CD8-positive, alpha-beta T cell (primary cell): ENCODE measurements at regions of chr3 and their contacts with region 1.

Region 1: DNA sequence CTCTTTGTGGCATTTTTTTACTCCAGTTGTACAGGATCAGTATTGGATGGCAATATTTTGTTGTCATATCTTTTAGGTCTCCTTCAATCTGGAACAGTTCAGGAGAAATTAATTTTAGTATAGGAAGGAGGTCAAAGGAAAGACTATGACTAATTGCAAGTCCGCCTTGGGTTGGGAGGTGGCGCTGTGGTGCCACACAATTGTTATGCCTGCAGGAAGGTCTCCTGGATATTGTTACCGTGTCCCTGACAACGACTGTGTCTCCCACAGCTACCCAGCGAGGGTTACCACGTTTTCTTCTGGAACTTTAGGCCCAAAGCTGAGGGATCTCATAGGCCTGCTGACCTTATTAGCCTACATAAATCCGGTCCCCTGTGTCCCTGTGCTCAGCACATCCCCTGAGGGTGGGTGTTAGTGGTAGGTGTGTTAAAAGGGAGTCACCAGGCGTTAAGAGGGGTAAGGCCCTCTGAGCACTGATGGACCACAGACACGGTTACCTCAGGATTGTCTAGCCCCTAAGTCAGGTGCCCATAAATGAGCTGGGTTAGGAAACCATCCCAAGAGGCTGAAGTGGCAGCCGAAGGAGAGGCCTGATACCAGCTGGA is 31.5 kb downstream of the KCNAB1 start:
- DNase-seq: peak in 8 of 9 experiments; percentile 25 to 66 (median 54)
- ATAC-seq: peak; percentile 56
- H3K4me3 ChIP-seq: no peak overlapping the region
- H3K4me3 Mint-ChIP-seq: no peak overlapping the region
- H3K27ac ChIP-seq: no peak overlapping the region
- H3K27ac Mint-ChIP-seq: no peak overlapping the region
- H3K4me1 ChIP-seq: no peaks in the 10 kb centered on the region
- H3K4me1 Mint-ChIP-seq: peaks cover 3% of the 10 kb centered on the region
- H3K27me3 ChIP-seq: no peaks in the 10 kb centered on the region
- H3K27me3 Mint-ChIP-seq: peaks cover 5% of the 10 kb centered on the region
- CTCF ChIP-seq: peak; percentile 73

Region 2: DNA sequence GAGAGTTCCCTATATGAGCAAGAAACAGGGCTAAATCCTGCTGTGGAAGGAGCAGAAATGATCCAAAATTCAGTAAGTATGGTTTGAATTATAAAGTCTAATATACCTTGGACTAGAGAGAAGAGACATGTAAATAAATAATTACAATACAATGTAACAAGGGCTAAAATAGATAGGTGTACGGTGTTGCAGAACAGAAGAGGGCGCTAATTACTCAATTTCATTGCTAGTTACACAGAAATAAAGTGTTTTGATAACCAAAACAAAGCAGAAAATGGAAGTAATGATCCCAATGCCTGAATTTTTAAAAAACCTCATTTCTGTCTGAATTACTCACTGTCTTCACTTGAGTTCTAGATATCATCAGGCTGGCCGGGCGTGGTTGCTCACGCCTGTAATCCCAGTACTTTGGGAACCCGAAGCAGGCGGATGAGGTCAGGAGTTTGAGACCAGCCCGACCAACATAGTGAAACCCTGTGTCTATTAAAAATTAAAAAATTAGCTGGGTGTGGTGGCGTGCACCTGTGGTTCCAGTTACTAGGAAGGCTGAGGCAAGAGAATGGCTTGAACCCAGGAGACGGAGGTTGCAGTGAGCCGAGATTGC is 398.8 kb before region 1 on chr3:
- CTCF ChIA-PET with region 1: no interaction called
- POLR2A ChIA-PET with region 1: no interaction called
- intact Hi-C with region 1: no loop called
- DNase-seq: peak in 2 of 9 experiments; percentile 25 to 39
- ATAC-seq: no peak
- H3K4me3 ChIP-seq: no peak overlapping the region
- H3K4me3 Mint-ChIP-seq: no peak overlapping the region
- H3K27ac ChIP-seq: no peak overlapping the region
- H3K27ac Mint-ChIP-seq: no peak overlapping the region
- H3K4me1 ChIP-seq: no peaks in the 10 kb centered on the region
- H3K4me1 Mint-ChIP-seq: no peaks in the 10 kb centered on the region
- H3K27me3 ChIP-seq: no peaks in the 10 kb centered on the region
- H3K27me3 Mint-ChIP-seq: no peaks in the 10 kb centered on the region
- CTCF ChIP-seq: peak; percentile 22

Region 3: GRCh38 chr3:156187146-156187769 is 35.3 kb after region 1 on chr3:
- CTCF ChIA-PET with region 1: no interaction called
- POLR2A ChIA-PET with region 1: no interaction called
- intact Hi-C with region 1: no loop called
- DNase-seq: no peak
- ATAC-seq: no peak
- H3K4me3 ChIP-seq: no peak overlapping the region
- H3K4me3 Mint-ChIP-seq: no peak overlapping the region
- H3K27ac ChIP-seq: no peak overlapping the region
- H3K27ac Mint-ChIP-seq: no peak overlapping the region
- H3K4me1 ChIP-seq: no peaks in the 10 kb centered on the region
- H3K4me1 Mint-ChIP-seq: no peaks in the 10 kb centered on the region
- H3K27me3 ChIP-seq: no peaks in the 10 kb centered on the region
- H3K27me3 Mint-ChIP-seq: no peaks in the 10 kb centered on the region
- CTCF ChIP-seq: no peak

Region 4: GRCh38 chr3:156382458-156383346 is 230.8 kb after region 1 on chr3:
- CTCF ChIA-PET with region 1: interaction called, 5 read pairs
- POLR2A ChIA-PET with region 1: no interaction called
- intact Hi-C with region 1: loop called (anchors 2 to 5 kb)
- DNase-seq: peak in 3 of 9 experiments; percentile 12 to 24 (median 13)
- ATAC-seq: no peak
- H3K4me3 ChIP-seq: no peak overlapping the region
- H3K4me3 Mint-ChIP-seq: no peak overlapping the region
- H3K27ac ChIP-seq: no peak overlapping the region
- H3K27ac Mint-ChIP-seq: no peak overlapping the region
- H3K4me1 ChIP-seq: no peaks in the 10 kb centered on the region
- H3K4me1 Mint-ChIP-seq: no peaks in the 10 kb centered on the region
- H3K27me3 ChIP-seq: no peaks in the 10 kb centered on the region
- H3K27me3 Mint-ChIP-seq: peaks cover 4% of the 10 kb centered on the region
- CTCF ChIP-seq: no peak

Region 5: DNA sequence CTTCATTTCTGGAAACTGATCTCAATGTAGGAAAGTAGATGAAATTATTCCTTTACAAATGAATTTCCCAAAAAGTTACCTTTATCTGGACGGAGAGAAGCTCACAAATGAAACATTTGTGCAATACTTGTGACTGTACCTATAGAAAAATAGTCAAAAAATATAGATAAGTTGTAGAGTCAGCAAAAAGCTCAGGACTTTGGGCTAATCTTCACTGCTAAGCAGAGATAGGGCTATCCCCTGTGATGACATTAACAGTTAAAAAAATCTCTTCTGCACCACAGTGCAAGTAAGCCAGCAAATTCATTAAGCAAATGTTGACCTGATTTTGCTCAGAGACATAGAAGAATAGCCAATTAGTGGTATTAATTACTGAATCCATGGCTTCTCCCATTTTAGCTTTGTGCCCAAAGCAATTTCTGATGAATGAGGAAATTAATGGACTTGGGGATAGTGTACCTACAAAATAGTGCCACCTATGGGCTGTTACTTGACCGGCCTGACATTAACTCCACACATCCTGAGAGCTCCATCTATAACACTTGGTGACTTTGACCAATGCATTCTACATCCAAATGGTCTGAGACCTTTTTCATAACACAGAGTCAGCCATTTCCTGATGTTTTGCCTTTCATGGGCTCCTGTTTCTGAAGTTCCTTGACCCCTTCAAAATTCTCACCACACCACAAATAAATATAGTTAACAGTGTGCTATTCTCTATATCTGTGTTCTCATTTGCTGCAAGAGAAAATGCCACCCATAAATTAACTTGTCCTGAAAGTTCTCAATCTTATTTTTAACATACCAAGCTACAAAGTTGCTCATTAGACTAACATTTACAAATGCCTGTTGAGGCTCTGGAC is 298.0 kb after region 1 on chr3:
- CTCF ChIA-PET with region 1: interaction called, 3 read pairs
- POLR2A ChIA-PET with region 1: no interaction called
- intact Hi-C with region 1: loop called in 1 of 2 experiments (anchors 2 kb)
- DNase-seq: peak in 2 of 9 experiments; percentile 16 to 29
- ATAC-seq: no peak
- H3K4me3 ChIP-seq: no peak overlapping the region
- H3K4me3 Mint-ChIP-seq: no peak overlapping the region
- H3K27ac ChIP-seq: no peak overlapping the region
- H3K27ac Mint-ChIP-seq: no peak overlapping the region
- H3K4me1 ChIP-seq: no peaks in the 10 kb centered on the region
- H3K4me1 Mint-ChIP-seq: no peaks in the 10 kb centered on the region
- H3K27me3 ChIP-seq: no peaks in the 10 kb centered on the region
- H3K27me3 Mint-ChIP-seq: no peaks in the 10 kb centered on the region
- CTCF ChIP-seq: peak; percentile 14

Region 6: GRCh38 chr3:156536524-156537231 is 384.8 kb after region 1 on chr3:
- CTCF ChIA-PET with region 1: interaction called, 35 read pairs
- POLR2A ChIA-PET with region 1: no interaction called
- intact Hi-C with region 1: loop called (anchors 1 kb)
- DNase-seq: no peak
- ATAC-seq: no peak
- H3K4me3 ChIP-seq: no peak overlapping the region
- H3K4me3 Mint-ChIP-seq: no peak overlapping the region
- H3K27ac ChIP-seq: no peak overlapping the region
- H3K27ac Mint-ChIP-seq: no peak overlapping the region
- H3K4me1 ChIP-seq: no peaks in the 10 kb centered on the region
- H3K4me1 Mint-ChIP-seq: no peaks in the 10 kb centered on the region
- H3K27me3 ChIP-seq: no peaks in the 10 kb centered on the region
- H3K27me3 Mint-ChIP-seq: no peaks in the 10 kb centered on the region
- CTCF ChIP-seq: no peak

Region 7: DNA sequence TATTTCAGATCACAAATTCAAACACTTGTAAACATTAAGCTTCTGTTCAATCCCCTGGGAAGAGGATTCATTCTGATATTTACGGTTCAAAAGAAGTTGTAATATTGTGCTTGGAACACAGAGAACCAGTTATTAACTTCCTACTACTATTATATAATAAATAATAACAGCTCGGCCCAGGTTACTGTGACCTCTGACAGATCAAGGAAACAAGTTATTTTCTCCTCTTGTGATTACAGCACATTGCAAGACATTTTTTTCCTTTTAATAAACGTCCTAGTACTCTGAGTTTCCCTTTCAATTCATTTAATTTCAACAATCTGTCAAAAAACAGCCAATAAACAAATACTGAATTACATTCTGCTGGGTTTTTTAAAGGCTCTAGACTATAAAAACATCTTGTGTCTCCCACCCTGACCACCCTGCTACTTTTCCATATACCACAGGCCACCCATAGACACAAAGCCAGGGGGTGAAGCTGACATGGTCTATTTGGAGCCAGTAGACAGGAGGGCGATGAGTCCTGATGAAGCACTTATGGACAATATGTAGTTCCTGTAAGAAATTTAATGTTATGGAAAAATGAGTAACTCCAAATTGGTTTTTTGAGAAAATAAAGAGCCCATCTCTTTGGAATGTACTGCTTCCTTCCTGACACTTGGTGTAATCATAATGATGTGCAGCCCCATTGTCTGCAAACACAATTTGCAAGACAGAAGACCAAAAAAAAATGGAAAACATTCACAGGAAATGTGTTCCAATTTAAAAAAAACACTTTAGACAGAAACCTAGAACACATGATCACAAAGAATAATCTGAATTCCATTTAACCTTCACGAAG is 391.0 kb after region 1 on chr3:
- CTCF ChIA-PET with region 1: interaction called, 35 read pairs
- POLR2A ChIA-PET with region 1: no interaction called
- intact Hi-C with region 1: loop called (anchors 1 kb)
- DNase-seq: no peak
- ATAC-seq: no peak
- H3K4me3 ChIP-seq: no peak overlapping the region
- H3K4me3 Mint-ChIP-seq: no peak overlapping the region
- H3K27ac ChIP-seq: no peak overlapping the region
- H3K27ac Mint-ChIP-seq: no peak overlapping the region
- H3K4me1 ChIP-seq: no peaks in the 10 kb centered on the region
- H3K4me1 Mint-ChIP-seq: peaks cover 15% of the 10 kb centered on the region
- H3K27me3 ChIP-seq: no peaks in the 10 kb centered on the region
- H3K27me3 Mint-ChIP-seq: no peaks in the 10 kb centered on the region
- CTCF ChIP-seq: no peak

Region 8: GRCh38 chr3:156685198-156685597 is 533.3 kb after region 1 on chr3:
- CTCF ChIA-PET with region 1: no interaction called
- POLR2A ChIA-PET with region 1: no interaction called
- intact Hi-C with region 1: no loop called
- DNase-seq: no peak
- ATAC-seq: no peak
- H3K4me3 ChIP-seq: no peak overlapping the region
- H3K4me3 Mint-ChIP-seq: peak overlapping the region; percentile 23
- H3K27ac ChIP-seq: no peak overlapping the region
- H3K27ac Mint-ChIP-seq: no peak overlapping the region
- H3K4me1 ChIP-seq: peaks cover 50% of the 10 kb centered on the region
- H3K4me1 Mint-ChIP-seq: peaks cover 89% of the 10 kb centered on the region
- H3K27me3 ChIP-seq: no peaks in the 10 kb centered on the region
- H3K27me3 Mint-ChIP-seq: no peaks in the 10 kb centered on the region
- CTCF ChIP-seq: no peak

Region 9: GRCh38 chr3:157239082-157239704 is 1087.3 kb after region 1 on chr3:
- CTCF ChIA-PET with region 1: no interaction called
- POLR2A ChIA-PET with region 1: no interaction called
- intact Hi-C with region 1: loop called (anchors 1 to 5 kb)
- DNase-seq: peak; percentile 49 to 80 (median 72)
- ATAC-seq: peak; percentile 100
- H3K4me3 ChIP-seq: no peak overlapping the region
- H3K4me3 Mint-ChIP-seq: no peak overlapping the region
- H3K27ac ChIP-seq: no peak overlapping the region
- H3K27ac Mint-ChIP-seq: no peak overlapping the region
- H3K4me1 ChIP-seq: no peaks in the 10 kb centered on the region
- H3K4me1 Mint-ChIP-seq: peaks cover 4% of the 10 kb centered on the region
- H3K27me3 ChIP-seq: no peaks in the 10 kb centered on the region
- H3K27me3 Mint-ChIP-seq: no peaks in the 10 kb centered on the region
- CTCF ChIP-seq: peak; percentile 73

Region 10: GRCh38 chr3:157572559-157573270 is 1420.8 kb after region 1 on chr3:
- CTCF ChIA-PET with region 1: no interaction called
- POLR2A ChIA-PET with region 1: no interaction called
- intact Hi-C with region 1: loop called in 1 of 2 experiments (anchors 5 kb)
- DNase-seq: peak in 2 of 9 experiments; percentile 25 to 33
- ATAC-seq: no peak
- H3K4me3 ChIP-seq: no peak overlapping the region
- H3K4me3 Mint-ChIP-seq: no peak overlapping the region
- H3K27ac ChIP-seq: no peak overlapping the region
- H3K27ac Mint-ChIP-seq: no peak overlapping the region
- H3K4me1 ChIP-seq: no peaks in the 10 kb centered on the region
- H3K4me1 Mint-ChIP-seq: no peaks in the 10 kb centered on the region
- H3K27me3 ChIP-seq: no peaks in the 10 kb centered on the region
- H3K27me3 Mint-ChIP-seq: peaks cover 7% of the 10 kb centered on the region
- CTCF ChIP-seq: peak; percentile 59